Activated CD4-positive, alpha-beta T cell treated with anti-CD3 and anti-CD28 coated beads, Interleukin-2, amount 10 ng/mL, durations not matched to agents 24 days and 14 days (primary cell): ENCODE measurements at regions of chr14 and their contacts with region 1.

Region 1: DNA sequence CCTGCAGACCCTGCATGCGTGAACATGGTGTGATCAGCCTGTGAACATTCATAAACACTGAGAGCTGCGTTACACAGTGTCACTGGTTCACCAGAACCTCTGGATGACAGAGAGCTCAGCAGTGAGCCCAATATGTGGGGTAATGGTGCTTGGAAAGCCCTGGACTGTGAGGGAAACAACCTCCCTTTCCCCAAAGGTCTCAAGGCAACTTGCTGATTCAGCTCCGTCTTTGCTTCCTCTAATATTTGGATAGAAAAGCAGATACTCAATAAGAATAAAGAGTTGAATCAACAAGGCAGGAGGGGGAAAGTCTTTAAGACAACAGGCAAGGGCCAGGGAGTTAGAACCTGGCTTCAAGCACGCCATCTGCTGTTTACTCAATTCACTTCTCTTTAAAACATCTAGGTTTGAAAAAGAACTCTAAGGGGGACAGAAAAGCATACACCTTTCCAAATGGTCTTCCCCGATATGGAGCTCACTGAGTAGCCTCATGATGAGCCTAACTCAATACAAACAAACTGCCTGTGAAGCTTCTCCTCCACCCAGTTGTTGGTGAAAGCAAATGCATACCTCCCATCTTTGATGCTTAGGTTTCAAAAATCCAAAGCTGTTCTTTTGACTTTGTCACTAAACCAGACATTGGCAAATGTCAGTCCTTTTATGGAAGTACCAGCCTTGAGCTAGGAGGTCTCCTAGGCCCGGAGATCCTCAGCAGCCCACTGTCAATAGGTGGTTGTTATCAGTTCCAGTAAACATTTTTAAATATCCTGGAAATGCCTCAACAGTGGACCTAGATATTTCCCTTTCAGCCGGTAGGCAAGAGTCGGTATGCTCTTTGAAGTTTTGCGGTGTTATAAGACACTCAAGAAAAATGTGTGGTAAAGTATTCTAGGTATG is 76.1 kb downstream of the SAMD4A start:
- DNase-seq: peak; percentile 66
- H3K4me3 Mint-ChIP-seq: no peak overlapping the region
- H3K27ac Mint-ChIP-seq: no peak overlapping the region
- H3K4me1 Mint-ChIP-seq: peaks cover 2% of the 10 kb centered on the region
- H3K27me3 Mint-ChIP-seq: peaks cover 5% of the 10 kb centered on the region

Region 2: DNA sequence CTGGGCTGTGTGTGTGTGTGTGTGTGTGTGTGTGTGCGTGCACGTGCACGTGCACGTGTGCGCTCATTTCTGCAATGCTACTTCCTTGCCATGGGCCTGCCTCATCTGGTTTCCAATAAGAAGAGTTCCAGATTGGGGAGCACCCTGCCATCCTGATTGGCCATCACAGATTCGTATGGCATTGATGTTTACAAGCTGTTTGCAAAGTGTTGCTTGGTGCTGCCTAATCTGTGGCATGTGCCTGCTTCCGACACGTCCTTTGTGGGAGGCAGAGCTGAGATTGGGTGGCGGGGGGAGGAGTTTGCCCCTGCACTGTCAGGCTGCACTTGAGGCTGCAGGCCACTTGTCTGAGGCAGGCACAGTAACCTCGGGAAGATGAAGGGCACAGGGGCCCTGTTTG is 36.9 kb before region 1 on chr14:
- intact Hi-C with region 1: no loop called
- DNase-seq: no peak
- H3K4me3 Mint-ChIP-seq: no peak overlapping the region
- H3K27ac Mint-ChIP-seq: no peak overlapping the region
- H3K4me1 Mint-ChIP-seq: no peaks in the 10 kb centered on the region
- H3K27me3 Mint-ChIP-seq: peaks cover 8% of the 10 kb centered on the region

Region 3: DNA sequence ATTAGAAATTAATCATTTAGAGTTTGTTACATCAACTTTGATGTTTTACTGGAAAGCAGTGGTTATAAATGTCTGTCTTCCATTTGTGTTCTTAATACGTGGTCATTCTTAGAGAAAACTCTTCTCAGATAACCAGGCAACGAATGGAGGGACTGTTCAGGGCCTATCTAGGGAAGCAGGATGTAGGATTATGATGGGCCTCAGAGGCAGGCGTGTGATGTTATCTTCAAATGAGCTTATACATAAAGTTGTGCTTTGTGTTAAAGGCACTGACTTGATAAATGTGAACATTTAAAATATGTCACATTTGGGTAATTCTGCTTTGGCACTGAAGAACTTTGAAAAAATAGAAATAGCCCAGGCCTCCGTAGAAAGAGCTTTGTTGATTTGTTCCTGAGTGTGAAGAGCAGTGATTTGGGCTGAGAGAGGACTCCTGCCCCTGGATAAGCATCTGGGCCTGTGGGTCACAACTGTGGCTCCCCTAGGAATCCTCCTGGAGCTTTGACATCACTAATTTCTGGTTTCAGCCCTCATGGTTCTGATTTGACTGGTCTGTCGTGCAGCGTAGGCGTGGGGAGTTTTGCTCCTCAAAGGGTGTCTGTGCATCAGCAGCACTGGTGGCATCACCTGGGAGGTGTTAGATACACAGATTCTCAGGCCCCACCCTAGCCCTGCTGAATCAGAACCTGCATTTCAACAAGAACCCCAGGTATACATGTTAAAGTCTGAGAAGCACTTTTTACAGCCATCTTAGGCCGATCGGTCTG is 20.7 kb before region 1 on chr14:
- intact Hi-C with region 1: loop called (anchors 1 kb)
- DNase-seq: peak; percentile 63
- H3K4me3 Mint-ChIP-seq: no peak overlapping the region
- H3K27ac Mint-ChIP-seq: no peak overlapping the region
- H3K4me1 Mint-ChIP-seq: peaks cover 28% of the 10 kb centered on the region
- H3K27me3 Mint-ChIP-seq: no peaks in the 10 kb centered on the region